PC-9 (cell line): ENCODE measurements at regions of chr1 and their contacts with region 1.

Region 1: GRCh38 chr1:87334351-87335174 is 5.9 kb downstream of the LMO4 start:
- DNase-seq: no peak
- H3K4me3 ChIP-seq: peak overlapping the region; percentile 64
- H3K27ac ChIP-seq: no peak overlapping the region
- H3K4me1 ChIP-seq: peaks cover 41% of the 10 kb centered on the region
- H3K27me3 ChIP-seq: no peaks in the 10 kb centered on the region
- CTCF ChIP-seq: no peak

Region 2: GRCh38 chr1:86887479-86888162 is 446.9 kb before region 1 on chr1:
- CTCF ChIA-PET with region 1: no interaction called
- POLR2A ChIA-PET with region 1: no interaction called
- intact Hi-C with region 1: no loop called
- DNase-seq: no peak
- H3K4me3 ChIP-seq: no peak overlapping the region
- H3K27ac ChIP-seq: no peak overlapping the region
- H3K4me1 ChIP-seq: no peaks in the 10 kb centered on the region
- H3K27me3 ChIP-seq: no peaks in the 10 kb centered on the region
- CTCF ChIP-seq: no peak

Region 3: GRCh38 chr1:87115317-87115890 is 219.2 kb before region 1 on chr1:
- CTCF ChIA-PET with region 1: interaction called, 10 read pairs
- POLR2A ChIA-PET with region 1: no interaction called
- intact Hi-C with region 1: no loop called
- DNase-seq: peak; percentile 24 to 49
- H3K4me3 ChIP-seq: no peak overlapping the region
- H3K27ac ChIP-seq: no peak overlapping the region
- H3K4me1 ChIP-seq: peaks cover 17% of the 10 kb centered on the region
- H3K27me3 ChIP-seq: no peaks in the 10 kb centered on the region
- CTCF ChIP-seq: no peak

Region 4: GRCh38 chr1:87379306-87379705 is 44.7 kb after region 1 on chr1:
- CTCF ChIA-PET with region 1: no interaction called
- POLR2A ChIA-PET with region 1: no interaction called
- intact Hi-C with region 1: no loop called
- DNase-seq: no peak
- H3K4me3 ChIP-seq: no peak overlapping the region
- H3K27ac ChIP-seq: no peak overlapping the region
- H3K4me1 ChIP-seq: no peaks in the 10 kb centered on the region
- H3K27me3 ChIP-seq: no peaks in the 10 kb centered on the region
- CTCF ChIP-seq: no peak

Region 5: GRCh38 chr1:87888446-87888845 is 553.9 kb after region 1 on chr1:
- CTCF ChIA-PET with region 1: no interaction called
- POLR2A ChIA-PET with region 1: no interaction called
- intact Hi-C with region 1: no loop called
- DNase-seq: no peak
- H3K4me3 ChIP-seq: no peak overlapping the region
- H3K27ac ChIP-seq: no peak overlapping the region
- H3K4me1 ChIP-seq: no peaks in the 10 kb centered on the region
- H3K27me3 ChIP-seq: no peaks in the 10 kb centered on the region
- CTCF ChIP-seq: no peak